Ascending aorta (tissue), 2 donors: ENCODE measurements at regions of chr17 and their contacts with region 1.

Region 1: DNA sequence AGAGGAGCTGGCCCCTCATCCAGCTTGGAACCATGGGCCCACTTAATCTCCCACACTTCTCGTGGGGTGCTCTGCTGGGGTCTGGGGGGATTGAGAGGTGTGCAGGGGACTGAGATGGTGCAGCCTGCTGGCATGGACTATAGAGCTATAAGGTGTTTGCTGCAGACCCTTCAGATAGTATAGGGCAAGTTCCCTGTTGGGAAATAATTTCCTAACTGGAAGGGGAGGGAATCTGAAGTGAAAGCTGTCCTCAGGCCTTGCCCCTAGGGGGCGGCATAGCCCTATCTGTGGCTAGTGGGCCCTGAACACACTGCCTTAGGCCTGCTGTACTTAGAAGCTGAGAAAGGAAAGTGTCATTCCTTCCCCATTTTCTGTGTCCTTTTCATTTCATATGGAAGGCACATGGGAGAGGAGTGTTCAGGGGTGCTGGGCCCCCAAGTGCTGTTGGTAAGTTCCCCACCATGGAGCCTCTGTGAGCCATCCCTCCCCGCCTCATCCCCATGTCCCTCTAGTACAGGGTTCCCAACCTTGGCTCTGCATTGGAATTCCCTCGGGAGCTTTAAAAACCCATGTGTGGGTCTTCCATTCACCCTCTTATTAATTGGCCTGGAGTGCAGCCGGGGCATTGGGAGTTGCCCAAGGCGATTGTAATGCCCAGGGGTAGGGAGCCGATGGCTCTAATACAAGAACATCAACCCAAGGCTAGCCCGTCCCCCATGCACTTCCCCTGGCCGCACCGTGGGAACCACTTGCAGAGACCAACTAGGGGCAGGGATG is 19.7 kb downstream of the GOSR2 start:
- DNase-seq: peak in 1 of 2 donors; percentile 82
- H3K4me3 ChIP-seq: no peak overlapping the region
- H3K27ac ChIP-seq: no peak overlapping the region
- H3K4me1 ChIP-seq: peaks cover 6 to 15% of the 10 kb centered on the region in 2 donors
- H3K27me3 ChIP-seq: no peaks in the 10 kb centered on the region
- CTCF ChIP-seq: peak; percentile 42 to 76 (median 73)

Region 2: GRCh38 chr17:46758623-46759022 is 184.0 kb before region 1 on chr17:
- intact Hi-C with region 1: no loop called
- DNase-seq: no peak
- H3K4me3 ChIP-seq: no peak overlapping the region
- H3K27ac ChIP-seq: no peak overlapping the region
- H3K4me1 ChIP-seq: no peaks in the 10 kb centered on the region
- H3K27me3 ChIP-seq: no peaks in the 10 kb centered on the region
- CTCF ChIP-seq: no peak

Region 3: GRCh38 chr17:46995841-46996571 is 53.4 kb after region 1 on chr17:
- intact Hi-C with region 1: loop called (anchors 1 kb)
- DNase-seq: no peak
- H3K4me3 ChIP-seq: no peak overlapping the region
- H3K27ac ChIP-seq: no peak overlapping the region
- H3K4me1 ChIP-seq: no peaks in the 10 kb centered on the region
- H3K27me3 ChIP-seq: no peaks in the 10 kb centered on the region
- CTCF ChIP-seq: no peak

Region 4: GRCh38 chr17:47057830-47058229 is 115.2 kb after region 1 on chr17:
- intact Hi-C with region 1: no loop called
- DNase-seq: no peak
- H3K4me3 ChIP-seq: no peak overlapping the region
- H3K27ac ChIP-seq: no peak overlapping the region
- H3K4me1 ChIP-seq: no peaks in the 10 kb centered on the region
- H3K27me3 ChIP-seq: no peaks in the 10 kb centered on the region
- CTCF ChIP-seq: no peak